ENCODE measurements at regions of chr9 and their contacts with region 1.

Region 1: GRCh38 chr9:129177791-129178559 is at the start of gene IER5L:
- DNase-seq: peak; percentile 91 to 93 (median 92)
- H3K4me3 ChIP-seq: peak within 1 kb of the TSS; percentile 47 to 59
- H3K4me3 Mint-ChIP-seq: peak within 1 kb of the TSS; percentile 89 to 93 (median 90)
- H3K27ac ChIP-seq: peak within 1 kb of the TSS; percentile 14
- H3K27ac Mint-ChIP-seq: peak within 1 kb of the TSS in 4 of 7 donors; percentile 81 to 93 (median 88)
- H3K4me1 ChIP-seq: peaks cover 28% of the 10 kb centered on the region
- H3K4me1 Mint-ChIP-seq: peaks cover 6 to 16% (median 9%) of the 10 kb centered on the region in 4 donors
- H3K27me3 ChIP-seq: peaks cover under 1% of the 10 kb centered on the region
- H3K27me3 Mint-ChIP-seq: peaks cover 0 to 2% of the 10 kb centered on the region in 2 donors
- total RNA-seq, gene IER5L: 3.1 to 3.6 TPM

Region 2: GRCh38 chr9:129139993-129140396 is 38.0 kb before region 1 on chr9:
- CTCF ChIA-PET with region 1: interaction called, 96 read pairs
- POLR2A ChIA-PET with region 1: interaction called, 85 read pairs
- intact Hi-C with region 1: loop called (anchors 2 kb)
- DNase-seq: peak; percentile 70 to 92 (median 73)
- H3K4me3 ChIP-seq: peak overlapping the region; percentile 78 to 82
- H3K4me3 Mint-ChIP-seq: peak overlapping the region; percentile 86 to 95 (median 90)
- H3K27ac ChIP-seq: peak overlapping the region; percentile 90
- H3K27ac Mint-ChIP-seq: peak overlapping the region; percentile 90 to 99 (median 92)
- H3K4me1 ChIP-seq: peaks cover 38% of the 10 kb centered on the region
- H3K4me1 Mint-ChIP-seq: peaks cover 15 to 37% (median 29%) of the 10 kb centered on the region in 4 donors
- H3K27me3 ChIP-seq: no peaks in the 10 kb centered on the region
- H3K27me3 Mint-ChIP-seq: no peaks in the 10 kb centered on the region

Region 3: GRCh38 chr9:129154866-129155477 is 23.0 kb before region 1 on chr9:
- CTCF ChIA-PET with region 1: no interaction called
- POLR2A ChIA-PET with region 1: no interaction called
- intact Hi-C with region 1: no loop called
- DNase-seq: no peak
- H3K4me3 ChIP-seq: no peak overlapping the region
- H3K4me3 Mint-ChIP-seq: no peak overlapping the region
- H3K27ac ChIP-seq: no peak overlapping the region
- H3K27ac Mint-ChIP-seq: no peak overlapping the region
- H3K4me1 ChIP-seq: no peaks in the 10 kb centered on the region
- H3K4me1 Mint-ChIP-seq: no peaks in the 10 kb centered on the region
- H3K27me3 ChIP-seq: no peaks in the 10 kb centered on the region
- H3K27me3 Mint-ChIP-seq: no peaks in the 10 kb centered on the region

Region 4: DNA sequence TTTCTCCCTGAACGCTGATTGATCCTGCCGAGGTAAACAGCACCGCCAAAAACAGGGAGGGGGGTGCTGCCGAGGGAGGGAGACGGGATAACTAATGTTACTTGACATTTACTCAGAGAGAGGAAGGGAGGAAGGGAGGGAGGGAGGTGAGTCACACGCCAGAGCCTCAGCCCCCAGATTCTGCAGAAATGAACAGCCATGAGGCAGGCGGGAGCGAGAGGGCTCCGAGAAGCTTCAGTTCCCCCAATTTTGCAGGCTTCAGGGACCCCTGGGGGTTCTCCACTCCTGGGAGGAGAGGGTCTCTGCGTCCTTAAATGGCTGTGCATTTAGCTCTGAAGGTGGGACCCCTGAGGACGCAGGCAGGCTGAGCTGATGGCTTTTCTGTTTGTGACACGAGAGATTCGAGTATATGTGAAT is 59.2 kb after region 1 on chr9:
- CTCF ChIA-PET with region 1: interaction called, 12 read pairs
- POLR2A ChIA-PET with region 1: interaction called, 37 read pairs
- intact Hi-C with region 1: loop called (anchors 1 kb)
- DNase-seq: peak in 2 of 5 donors; percentile 18 to 66
- H3K4me3 ChIP-seq: peak overlapping the region in 1 of 2 donors; percentile 47
- H3K4me3 Mint-ChIP-seq: peak overlapping the region; percentile 76 to 88 (median 86)
- H3K27ac ChIP-seq: peak overlapping the region; percentile 29
- H3K27ac Mint-ChIP-seq: peak overlapping the region; percentile 88 to 96 (median 93)
- H3K4me1 ChIP-seq: peaks cover 52% of the 10 kb centered on the region
- H3K4me1 Mint-ChIP-seq: peaks cover 39 to 63% (median 51%) of the 10 kb centered on the region in 4 donors
- H3K27me3 ChIP-seq: no peaks in the 10 kb centered on the region
- H3K27me3 Mint-ChIP-seq: no peaks in the 10 kb centered on the region

Region 5: DNA sequence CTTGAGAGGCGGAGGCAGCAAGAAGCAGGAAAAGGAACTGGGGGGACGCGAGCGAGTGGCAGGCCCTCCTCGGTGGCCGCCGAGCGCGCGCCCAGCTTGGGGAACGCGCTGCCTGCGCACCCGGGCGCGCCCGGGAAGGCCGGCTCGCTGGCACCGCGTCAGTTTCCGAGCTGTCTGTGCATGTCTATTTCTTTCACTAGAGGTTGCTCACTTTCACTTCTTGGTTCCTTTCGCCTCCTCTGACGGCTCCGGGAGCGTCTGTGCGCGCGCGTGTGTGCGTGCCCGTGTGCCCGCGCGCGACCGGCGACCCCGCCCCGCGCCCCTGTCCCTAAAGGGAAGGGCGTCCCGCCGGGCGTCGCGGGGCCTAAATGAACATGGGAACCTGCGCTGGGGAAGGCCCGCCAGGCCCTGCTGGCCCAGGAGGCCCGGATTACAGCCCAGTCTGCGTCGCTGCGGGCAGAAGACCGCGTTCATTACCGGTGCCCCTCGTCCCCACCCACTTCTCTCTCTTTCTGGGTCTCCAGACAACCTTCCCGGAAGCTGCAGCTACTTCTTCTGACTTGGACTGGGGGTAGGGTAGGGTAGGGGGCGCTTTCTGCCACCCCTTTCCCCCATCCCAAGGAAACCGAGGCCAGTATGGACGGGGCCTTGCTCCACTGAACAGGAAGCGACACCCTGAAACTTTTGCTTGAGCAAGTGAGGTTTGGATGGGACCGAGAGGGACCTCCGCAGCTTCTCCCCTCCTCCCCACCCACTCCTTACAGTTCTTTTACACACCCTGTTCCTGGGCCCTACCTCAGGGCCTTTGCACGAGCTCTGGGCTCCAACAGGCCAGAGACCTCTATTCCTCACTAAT is 205.8 kb after region 1 on chr9:
- CTCF ChIA-PET with region 1: interaction called, 6 read pairs
- POLR2A ChIA-PET with region 1: interaction called, 20 read pairs
- intact Hi-C with region 1: loop called (anchors 10 kb)
- DNase-seq: peak; percentile 74 to 84 (median 77)
- H3K4me3 ChIP-seq: peak overlapping the region; percentile 14 to 56
- H3K4me3 Mint-ChIP-seq: peak overlapping the region; percentile 76 to 83 (median 78)
- H3K27ac ChIP-seq: peak overlapping the region; percentile 42
- H3K27ac Mint-ChIP-seq: peak overlapping the region; percentile 10 to 95 (median 90)
- H3K4me1 ChIP-seq: peaks cover 11% of the 10 kb centered on the region
- H3K4me1 Mint-ChIP-seq: peaks cover 0 to 13% (median 4%) of the 10 kb centered on the region in 4 donors
- H3K27me3 ChIP-seq: no peaks in the 10 kb centered on the region
- H3K27me3 Mint-ChIP-seq: no peaks in the 10 kb centered on the region

Region 6: GRCh38 chr9:129487642-129488409 is 309.9 kb after region 1 on chr9:
- CTCF ChIA-PET with region 1: interaction called, 6 read pairs
- POLR2A ChIA-PET with region 1: interaction called, 14 read pairs
- intact Hi-C with region 1: loop called (anchors 2 kb)
- DNase-seq: peak in 2 of 5 donors; percentile 50 to 73
- H3K4me3 ChIP-seq: peak overlapping the region; percentile 38 to 52
- H3K4me3 Mint-ChIP-seq: peak overlapping the region; percentile 87 to 93 (median 90)
- H3K27ac ChIP-seq: peak overlapping the region; percentile 91
- H3K27ac Mint-ChIP-seq: peak overlapping the region; percentile 93 to 100 (median 98)
- H3K4me1 ChIP-seq: peaks cover 65% of the 10 kb centered on the region
- H3K4me1 Mint-ChIP-seq: peaks cover 33 to 80% (median 54%) of the 10 kb centered on the region in 4 donors
- H3K27me3 ChIP-seq: no peaks in the 10 kb centered on the region
- H3K27me3 Mint-ChIP-seq: peaks cover 0 to 3% of the 10 kb centered on the region in 2 donors

Region 7: GRCh38 chr9:129626079-129626624 is 448.2 kb after region 1 on chr9 and contains the start of gene NTMT1:
- CTCF ChIA-PET with region 1: interaction called, 42 read pairs
- POLR2A ChIA-PET with region 1: interaction called, 8 read pairs
- intact Hi-C with region 1: no loop called
- DNase-seq: peak; percentile 88 to 91 (median 90)
- H3K4me3 ChIP-seq: peak within 1 kb of the TSS; percentile 80 to 98
- H3K4me3 Mint-ChIP-seq: peak within 1 kb of the TSS; percentile 84 to 93 (median 89)
- H3K27ac ChIP-seq: peak within 1 kb of the TSS; percentile 91
- H3K27ac Mint-ChIP-seq: peak within 1 kb of the TSS; percentile 89 to 96 (median 95)
- H3K4me1 ChIP-seq: peaks cover 48% of the 10 kb centered on the region
- H3K4me1 Mint-ChIP-seq: peaks cover 27 to 72% (median 53%) of the 10 kb centered on the region in 4 donors
- H3K27me3 ChIP-seq: peaks cover under 1% of the 10 kb centered on the region
- H3K27me3 Mint-ChIP-seq: peaks cover 5 to 14% of the 10 kb centered on the region in 2 donors
- total RNA-seq, gene NTMT1: 45.0 to 45.3 TPM